Activated CD4-positive, alpha-beta T cell treated with anti-CD3 and anti-CD28 coated beads for 36 hours (primary cell): ENCODE measurements at regions of chr22 and their contacts with region 1.

Region 1: DNA sequence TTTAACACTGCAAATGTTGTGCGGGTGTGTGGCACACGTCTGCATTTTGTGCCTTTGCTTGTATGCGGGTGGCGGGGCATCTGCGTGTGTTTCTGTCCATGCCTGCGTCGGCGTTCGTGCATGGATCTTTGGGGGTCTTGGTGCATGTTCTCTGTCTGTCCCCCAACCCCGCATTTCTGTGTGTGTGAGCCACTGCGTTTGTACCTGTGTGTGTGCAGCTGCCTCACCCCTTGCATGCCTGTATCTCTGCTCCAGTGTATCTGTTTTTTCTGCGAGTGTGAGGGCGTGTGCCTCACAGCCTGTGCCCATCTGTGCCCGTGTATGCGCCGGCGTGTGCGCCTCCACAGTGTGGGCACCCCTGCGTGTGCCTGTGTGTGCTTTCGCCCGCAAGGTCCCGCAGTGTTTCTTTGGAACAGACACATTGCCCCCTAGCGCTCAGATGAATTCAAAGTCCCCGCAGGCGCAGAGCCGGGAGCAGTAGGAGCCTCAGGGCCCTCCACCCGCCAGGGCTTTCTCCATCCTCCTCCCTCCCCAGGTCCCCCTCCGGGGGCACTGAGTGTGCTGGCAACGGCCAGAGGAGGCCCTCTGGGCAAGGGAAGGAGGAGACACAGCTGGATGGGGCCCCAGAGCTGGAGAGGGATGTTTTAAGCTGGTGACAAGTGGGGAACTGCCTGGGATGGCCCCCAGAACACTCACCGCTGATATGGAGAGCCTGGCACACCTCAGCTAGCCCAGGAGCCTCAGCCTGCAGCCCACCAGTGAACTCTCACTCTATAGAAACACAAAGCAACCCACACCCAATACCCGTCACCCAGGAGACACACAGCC is 3.1 kb upstream of the MN1 start:
- DNase-seq: peak; percentile 75
- ATAC-seq: peak; percentile 62
- H3K4me3 Mint-ChIP-seq: no peak overlapping the region
- H3K27ac Mint-ChIP-seq: no peak overlapping the region
- H3K4me1 Mint-ChIP-seq: peaks cover 8% of the 10 kb centered on the region
- H3K27me3 Mint-ChIP-seq: peaks cover 30% of the 10 kb centered on the region

Region 2: DNA sequence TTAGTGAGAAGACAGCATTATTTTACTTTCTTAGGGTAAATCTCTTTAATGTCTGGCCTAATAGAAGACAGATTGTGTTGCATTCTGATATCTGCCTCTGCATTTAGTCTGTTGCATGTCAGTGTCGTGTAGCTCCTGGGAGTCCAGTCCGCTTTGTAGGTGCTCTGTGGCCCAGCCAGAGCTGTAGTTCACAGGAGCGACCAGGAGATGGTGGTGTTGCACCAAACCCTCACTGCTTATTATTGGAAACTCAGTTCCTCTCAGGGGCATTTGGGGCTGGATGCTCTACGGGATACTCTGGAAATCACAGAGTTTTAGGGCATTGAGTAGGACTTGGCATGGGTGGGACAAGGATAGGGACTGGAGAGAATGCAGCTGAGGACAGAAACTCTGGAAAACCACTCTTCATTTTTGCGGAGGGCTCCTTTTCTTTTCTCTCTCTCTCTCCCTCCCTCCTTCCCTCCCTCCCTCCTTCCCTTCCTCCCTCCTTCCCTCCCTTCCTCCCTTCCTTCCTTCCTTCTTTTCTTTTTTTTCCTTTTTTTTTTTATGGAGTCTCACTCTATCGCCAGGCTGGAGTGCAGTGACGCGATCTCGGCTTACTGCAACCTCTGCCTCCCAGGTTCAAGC is 1125.6 kb before region 1 on chr22:
- CTCF ChIA-PET with region 1: interaction called, 4 read pairs
- POLR2A ChIA-PET with region 1: no interaction called
- intact Hi-C with region 1: loop called (anchors 2 to 10 kb)
- DNase-seq: peak; percentile 85
- ATAC-seq: peak; percentile 76
- H3K4me3 Mint-ChIP-seq: no peak overlapping the region
- H3K27ac Mint-ChIP-seq: peak overlapping the region; percentile 39
- H3K4me1 Mint-ChIP-seq: peaks cover 52% of the 10 kb centered on the region
- H3K27me3 Mint-ChIP-seq: no peaks in the 10 kb centered on the region

Region 3: DNA sequence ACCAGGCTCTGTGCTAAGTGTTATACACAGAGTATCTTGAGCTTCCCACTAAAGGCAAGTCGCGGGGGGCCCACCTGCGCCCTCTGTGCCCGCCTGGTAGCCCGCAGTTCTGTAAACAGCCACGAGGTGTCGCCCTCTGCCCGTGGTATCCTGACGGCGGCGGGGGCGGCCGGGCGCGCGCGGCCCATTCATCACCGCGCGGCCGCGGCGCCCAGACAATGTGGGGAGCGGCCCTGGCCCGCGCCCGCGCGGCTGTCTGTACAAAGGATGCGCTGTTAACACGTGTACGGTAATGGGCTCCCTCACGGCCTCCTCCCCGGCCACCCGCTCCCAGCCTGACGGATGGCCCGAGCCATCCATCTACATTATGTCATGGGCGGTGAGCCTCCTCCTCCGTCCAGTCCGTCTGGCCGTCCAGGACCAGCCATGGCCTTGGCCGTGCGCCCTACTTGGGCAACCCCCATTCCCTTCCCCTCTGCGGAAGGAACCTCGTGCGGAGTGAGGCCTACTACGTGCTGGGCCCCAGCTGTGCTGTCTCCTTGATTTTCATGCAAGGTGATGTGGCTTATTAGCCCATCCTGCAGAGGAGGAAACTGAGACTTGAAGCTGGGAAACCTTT is 1047.9 kb before region 1 on chr22:
- CTCF ChIA-PET with region 1: no interaction called
- POLR2A ChIA-PET with region 1: no interaction called
- intact Hi-C with region 1: loop called (anchors 2 to 5 kb)
- DNase-seq: peak; percentile 80
- ATAC-seq: peak; percentile 81
- H3K4me3 Mint-ChIP-seq: no peak overlapping the region
- H3K27ac Mint-ChIP-seq: no peak overlapping the region
- H3K4me1 Mint-ChIP-seq: no peaks in the 10 kb centered on the region
- H3K27me3 Mint-ChIP-seq: no peaks in the 10 kb centered on the region

Region 4: GRCh38 chr22:26835929-26836528 is 968.7 kb before region 1 on chr22:
- CTCF ChIA-PET with region 1: no interaction called
- POLR2A ChIA-PET with region 1: no interaction called
- intact Hi-C with region 1: loop called in 1 of 2 experiments (anchors 5 kb)
- DNase-seq: peak; percentile 80
- ATAC-seq: no peak
- H3K4me3 Mint-ChIP-seq: no peak overlapping the region
- H3K27ac Mint-ChIP-seq: no peak overlapping the region
- H3K4me1 Mint-ChIP-seq: no peaks in the 10 kb centered on the region
- H3K27me3 Mint-ChIP-seq: no peaks in the 10 kb centered on the region

Region 5: GRCh38 chr22:27405672-27406388 is 398.9 kb before region 1 on chr22:
- CTCF ChIA-PET with region 1: no interaction called
- POLR2A ChIA-PET with region 1: no interaction called
- intact Hi-C with region 1: loop called (anchors 1 to 5 kb)
- DNase-seq: peak; percentile 55
- ATAC-seq: no peak
- H3K4me3 Mint-ChIP-seq: no peak overlapping the region
- H3K27ac Mint-ChIP-seq: no peak overlapping the region
- H3K4me1 Mint-ChIP-seq: no peaks in the 10 kb centered on the region
- H3K27me3 Mint-ChIP-seq: peaks cover 18% of the 10 kb centered on the region

Region 6: GRCh38 chr22:27686534-27686933 is 118.2 kb before region 1 on chr22:
- CTCF ChIA-PET with region 1: no interaction called
- POLR2A ChIA-PET with region 1: no interaction called
- intact Hi-C with region 1: no loop called
- DNase-seq: no peak
- ATAC-seq: no peak
- H3K4me3 Mint-ChIP-seq: no peak overlapping the region
- H3K27ac Mint-ChIP-seq: no peak overlapping the region
- H3K4me1 Mint-ChIP-seq: no peaks in the 10 kb centered on the region
- H3K27me3 Mint-ChIP-seq: peaks cover 3% of the 10 kb centered on the region

Region 7: GRCh38 chr22:27780161-27780575 is 24.5 kb before region 1 on chr22:
- CTCF ChIA-PET with region 1: no interaction called
- POLR2A ChIA-PET with region 1: no interaction called
- intact Hi-C with region 1: no loop called
- DNase-seq: no peak
- ATAC-seq: no peak
- H3K4me3 Mint-ChIP-seq: no peak overlapping the region
- H3K27ac Mint-ChIP-seq: no peak overlapping the region
- H3K4me1 Mint-ChIP-seq: no peaks in the 10 kb centered on the region
- H3K27me3 Mint-ChIP-seq: peaks cover 13% of the 10 kb centered on the region

Region 8: DNA sequence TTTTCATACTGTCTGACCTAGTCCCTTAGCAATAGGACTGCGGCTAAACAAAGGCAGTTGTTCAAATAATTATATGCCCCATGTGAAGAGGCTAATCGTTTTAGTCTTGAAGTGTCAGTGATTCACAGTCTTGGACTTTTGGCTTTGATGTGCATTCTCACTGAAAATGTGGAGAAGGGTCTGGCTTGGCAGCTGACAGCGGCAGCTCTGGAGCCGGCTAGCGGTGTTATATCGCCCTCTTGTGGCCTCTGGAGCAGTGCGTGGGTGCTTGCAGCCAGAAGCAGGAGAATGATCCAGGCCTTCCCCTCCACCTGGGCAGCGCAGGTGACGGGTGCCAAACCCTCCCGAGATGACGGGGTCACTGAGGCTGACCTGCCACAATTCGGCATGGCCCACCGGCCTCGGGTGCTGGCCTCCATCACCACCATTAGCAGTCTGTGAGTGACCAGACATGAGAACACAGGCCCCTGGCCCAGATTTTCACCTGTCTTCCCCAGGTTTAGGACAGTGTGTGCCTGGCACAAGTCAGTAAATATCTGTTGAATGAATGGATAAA is 204.7 kb after region 1 on chr22:
- CTCF ChIA-PET with region 1: no interaction called
- POLR2A ChIA-PET with region 1: no interaction called
- intact Hi-C with region 1: loop called in 1 of 2 experiments (anchors 5 kb)
- DNase-seq: peak; percentile 88
- ATAC-seq: peak; percentile 85
- H3K4me3 Mint-ChIP-seq: no peak overlapping the region
- H3K27ac Mint-ChIP-seq: no peak overlapping the region
- H3K4me1 Mint-ChIP-seq: no peaks in the 10 kb centered on the region
- H3K27me3 Mint-ChIP-seq: no peaks in the 10 kb centered on the region